Dendritic cell treated with granulocyte-macrophage colony-stimulating factor and Interleukin-4, amounts not matched to agents 40 ng/mL and 50 ng/mL, for 4 days (primary cell): ENCODE measurements at regions of chr10 and their contacts with region 1.

Region 1: GRCh38 chr10:61992671-61993668 is 91.5 kb downstream of the ARID5B start:
- H3K4me3 Mint-ChIP-seq: peak overlapping the region; percentile 67
- H3K27ac Mint-ChIP-seq: peak overlapping the region; percentile 93
- H3K4me1 Mint-ChIP-seq: peaks cover 30% of the 10 kb centered on the region
- H3K27me3 Mint-ChIP-seq: no peaks in the 10 kb centered on the region

Region 2: GRCh38 chr10:61786728-61787127 is 206.2 kb before region 1 on chr10:
- intact Hi-C with region 1: no loop called
- H3K4me3 Mint-ChIP-seq: no peak overlapping the region
- H3K27ac Mint-ChIP-seq: no peak overlapping the region
- H3K4me1 Mint-ChIP-seq: peaks cover 6% of the 10 kb centered on the region
- H3K27me3 Mint-ChIP-seq: no peaks in the 10 kb centered on the region

Region 3: DNA sequence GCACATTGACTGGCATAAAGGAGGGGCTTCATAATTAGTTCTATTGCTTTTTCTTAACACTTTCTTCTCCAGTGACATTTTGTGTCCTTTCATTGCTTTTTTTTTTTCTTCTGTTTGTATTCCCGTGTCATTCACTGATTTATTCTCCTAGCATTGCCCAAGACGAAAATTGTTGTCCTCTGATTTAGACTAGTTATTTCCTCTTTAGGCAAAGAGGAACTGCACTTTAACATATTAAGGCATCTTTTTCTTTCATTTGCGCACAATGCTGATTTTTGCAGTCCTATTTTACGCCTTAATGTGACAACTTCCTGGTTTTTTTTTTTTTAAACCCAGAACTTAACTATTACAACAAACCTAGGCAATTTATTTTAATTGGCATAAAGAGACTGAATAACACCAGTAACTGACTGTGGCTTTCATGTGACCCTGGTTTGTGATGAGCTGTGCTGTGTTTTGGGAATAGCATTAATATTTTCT is 51.7 kb before region 1 on chr10:
- intact Hi-C with region 1: loop called (anchors 1 kb)
- H3K4me3 Mint-ChIP-seq: peak overlapping the region; percentile 64
- H3K27ac Mint-ChIP-seq: peak overlapping the region; percentile 94
- H3K4me1 Mint-ChIP-seq: peaks cover 59% of the 10 kb centered on the region
- H3K27me3 Mint-ChIP-seq: no peaks in the 10 kb centered on the region